ENCODE measurements at regions of chrX and their contacts with region 1.

Region 1: GRCh38 chrX:110412971-110413721 is 54.5 kb downstream of the RTL9 start:
- DNase-seq: peak; percentile 59

Region 2: GRCh38 chrX:110167952-110168451 is 245.1 kb before region 1 on chrX:
- in situ Hi-C with region 1: loop called (anchors 25 kb)
- DNase-seq: peak; percentile 43

Measured in ACHN (cell line).